ENCODE measurements at regions of chr5 and their contacts with region 1.

Region 1: DNA sequence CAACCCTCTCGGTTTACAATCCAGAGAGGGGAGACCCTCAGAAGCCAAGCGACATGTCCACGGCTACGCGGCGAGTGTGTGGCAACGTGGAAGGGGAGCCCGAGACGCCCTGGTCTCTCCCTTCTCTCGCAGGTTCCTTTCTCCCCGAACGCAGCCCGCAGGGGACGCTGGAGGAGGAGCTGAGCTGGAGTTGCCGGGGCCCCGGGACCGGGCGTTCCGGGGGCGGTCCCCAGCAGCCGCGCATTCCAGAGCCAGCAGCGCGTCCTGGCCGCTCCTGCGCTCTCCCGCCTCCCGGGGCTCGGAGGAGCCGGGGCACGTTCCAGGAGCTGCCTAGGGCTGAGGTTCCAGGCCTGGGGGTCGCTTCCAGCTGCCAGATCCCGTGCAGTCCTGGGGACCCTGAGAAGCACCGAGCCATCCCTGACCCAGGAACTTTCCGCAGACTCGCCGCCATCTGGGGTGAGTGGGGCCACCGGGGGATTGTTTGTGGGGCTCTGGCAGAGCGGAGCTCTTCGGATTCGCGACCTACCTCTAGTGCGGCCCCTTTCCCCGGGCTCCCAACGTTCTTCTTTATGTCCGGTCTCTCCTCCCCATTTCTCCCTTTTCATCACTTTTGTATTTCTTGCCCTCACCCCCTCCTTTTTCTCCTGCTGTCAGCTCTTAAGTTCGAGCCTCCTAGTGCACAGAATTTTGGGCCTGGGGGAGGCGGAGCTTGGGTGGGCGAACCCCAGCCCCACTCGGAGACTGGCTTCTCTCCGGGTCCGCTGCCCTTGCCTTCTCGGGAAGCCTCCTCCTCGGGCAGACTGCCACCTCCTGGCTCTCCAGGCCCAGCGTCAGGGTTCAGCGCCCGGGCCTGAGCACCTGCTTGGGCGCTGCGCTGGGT is at the start of gene SMIM3:
- DNase-seq: peak; percentile 58
- H3K4me3 ChIP-seq: peak within 1 kb of the TSS; percentile 7 to 41 (median 40)
- H3K27ac ChIP-seq: no peak within 1 kb of the TSS
- H3K4me1 ChIP-seq: peaks cover 30% of the 10 kb centered on the region
- H3K27me3 ChIP-seq: peaks cover 30 to 43% of the 10 kb centered on the region in 2 experiments
- CTCF ChIP-seq: peak; percentile 20 to 56
- POLR2A ChIP-seq: no peak
- total RNA-seq, gene SMIM3: 0.97 and 1.0 TPM in 2 replicates

Region 2: DNA sequence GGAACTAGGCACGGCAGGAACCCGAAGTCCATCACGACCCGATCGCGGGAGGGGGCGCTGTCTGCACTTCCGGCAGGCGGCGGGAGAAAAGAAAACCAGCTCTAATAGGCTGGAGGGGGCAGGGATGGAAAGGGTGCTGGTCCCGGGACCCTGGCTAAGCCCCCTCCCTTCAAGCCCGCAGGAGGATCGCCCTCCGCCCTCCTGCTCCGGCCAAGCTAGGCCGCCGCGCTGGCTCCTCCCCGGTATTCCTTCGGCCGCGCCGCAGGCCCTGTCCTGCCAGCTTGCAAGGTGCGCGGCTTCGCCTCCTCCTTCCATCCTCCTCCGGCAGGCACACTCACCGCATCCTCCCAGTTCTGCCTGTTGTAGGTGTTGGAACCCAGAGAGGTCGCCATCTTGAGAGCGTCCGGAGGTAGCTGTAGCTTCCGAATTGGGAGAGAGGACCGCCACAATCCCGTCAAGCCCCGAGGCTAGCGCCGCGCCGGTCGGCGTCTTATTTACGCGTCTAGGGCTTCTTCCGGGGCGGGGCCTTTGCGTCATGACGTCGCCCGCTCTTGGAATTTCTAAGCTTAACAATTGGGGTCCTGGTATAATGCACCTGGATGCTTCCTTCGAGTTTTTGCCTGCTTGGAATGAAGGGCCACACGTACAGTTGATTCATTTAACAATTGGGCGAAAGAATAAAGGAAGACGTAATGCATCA is 78.0 kb before region 1 on chr5 and contains the start of gene RBM22:
- CTCF ChIA-PET with region 1: interaction called, 19 read pairs
- POLR2A ChIA-PET with region 1: no interaction called
- dilution Hi-C with region 1: no loop called
- intact Hi-C with region 1: loop called (anchors 1 kb)
- DNase-seq: peak; percentile 92
- H3K4me3 ChIP-seq: peak within 1 kb of the TSS; percentile 45 to 98 (median 69)
- H3K27ac ChIP-seq: peak within 1 kb of the TSS; percentile 73
- H3K4me1 ChIP-seq: peaks cover 13% of the 10 kb centered on the region
- H3K27me3 ChIP-seq: peaks cover 3 to 6% of the 10 kb centered on the region in 2 experiments
- CTCF ChIP-seq: peak; percentile 40 to 78
- POLR2A ChIP-seq: peak; percentile 93
- total RNA-seq, gene RBM22: 44.4 and 51.2 TPM in 2 replicates

Region 3: DNA sequence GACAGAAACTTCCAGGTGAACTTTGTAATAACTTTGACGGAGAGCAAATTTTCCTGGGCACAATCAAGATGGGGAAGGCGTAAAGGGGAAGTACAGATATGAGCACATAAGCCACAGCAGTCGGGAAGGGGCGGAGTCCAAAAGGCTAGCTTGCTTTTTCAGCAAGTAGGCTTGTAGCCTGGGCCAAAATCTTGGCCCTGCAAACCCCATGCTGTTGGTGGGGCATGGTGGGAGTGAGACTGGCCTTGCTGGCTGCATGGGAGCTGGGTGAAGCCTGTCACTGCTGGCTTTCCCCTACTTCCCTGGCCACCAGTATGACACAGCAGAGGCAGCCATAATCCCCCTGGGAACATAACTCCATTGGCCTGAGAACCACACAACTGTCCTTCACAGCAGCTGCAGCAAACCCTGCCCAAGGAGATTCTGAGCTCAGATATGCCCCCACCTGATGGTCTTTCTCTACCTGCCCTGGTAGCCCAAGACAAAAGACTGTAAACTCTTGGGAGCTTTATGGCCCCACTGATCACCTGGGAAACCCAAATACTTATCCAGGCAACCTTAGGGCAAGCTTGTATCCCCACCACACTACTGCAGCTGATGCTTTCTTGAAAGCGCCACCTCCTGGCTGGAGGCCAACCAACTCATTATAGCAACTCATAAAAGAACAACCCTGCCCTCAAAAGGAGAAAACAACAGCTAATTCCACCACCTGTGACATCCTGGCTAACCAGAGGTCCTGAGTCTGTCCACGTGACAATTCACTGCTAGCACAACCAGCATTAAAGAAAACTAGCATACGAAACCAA is 44.0 kb before region 1 on chr5:
- CTCF ChIA-PET with region 1: no interaction called
- POLR2A ChIA-PET with region 1: no interaction called
- dilution Hi-C with region 1: no loop called
- intact Hi-C with region 1: no loop called
- DNase-seq: no peak
- H3K4me3 ChIP-seq: no peak overlapping the region
- H3K27ac ChIP-seq: no peak overlapping the region
- H3K4me1 ChIP-seq: no peaks in the 10 kb centered on the region
- H3K27me3 ChIP-seq: no peaks in the 10 kb centered on the region
- CTCF ChIP-seq: no peak
- POLR2A ChIP-seq: no peak

Region 4: DNA sequence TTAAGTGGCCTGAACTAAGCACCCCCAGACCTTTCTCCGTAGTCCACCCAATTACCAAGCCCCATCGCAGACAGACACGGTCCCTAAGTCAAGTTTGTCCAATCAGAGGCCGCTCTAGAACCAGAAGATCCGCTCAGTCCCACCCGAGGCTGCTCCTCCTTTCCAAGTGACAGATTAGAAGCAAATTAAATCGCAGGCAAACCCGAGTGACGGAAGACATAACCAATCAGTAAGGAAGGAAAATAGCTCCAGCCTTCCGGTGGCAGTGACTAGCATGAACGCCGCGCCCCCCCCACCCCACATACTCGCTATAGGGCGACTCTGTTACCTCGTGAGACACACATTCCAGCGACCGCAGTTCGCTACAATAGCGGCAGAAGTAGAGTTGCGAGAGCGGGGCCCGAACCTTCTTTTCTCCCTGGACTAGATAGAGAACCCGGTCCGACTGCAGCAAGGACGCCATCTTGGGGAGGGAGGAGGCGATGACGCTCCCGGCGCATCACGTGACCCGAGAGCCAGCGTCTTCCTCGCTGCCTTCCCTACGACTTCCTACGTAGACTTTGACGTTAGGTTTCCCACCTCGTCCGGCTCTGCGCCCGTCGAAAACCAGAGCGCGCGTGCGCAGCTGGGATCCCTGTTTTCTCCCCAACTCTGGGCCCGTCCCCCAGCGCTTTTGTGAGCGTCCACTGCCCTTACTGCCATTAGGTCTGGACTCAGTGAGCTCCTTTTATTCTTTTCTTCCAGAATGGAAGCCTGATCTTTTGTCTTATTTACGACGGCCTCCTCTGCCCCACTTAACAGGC is 20.0 kb before region 1 on chr5 and contains the start of gene DCTN4:
- CTCF ChIA-PET with region 1: interaction called, 14 read pairs
- POLR2A ChIA-PET with region 1: no interaction called
- dilution Hi-C with region 1: no loop called
- intact Hi-C with region 1: loop called (anchors 1 kb)
- DNase-seq: peak; percentile 99
- H3K4me3 ChIP-seq: peak within 1 kb of the TSS; percentile 62 to 80 (median 62)
- H3K27ac ChIP-seq: peak within 1 kb of the TSS; percentile 76
- H3K4me1 ChIP-seq: peaks cover 13% of the 10 kb centered on the region
- H3K27me3 ChIP-seq: peaks cover 0 to 5% of the 10 kb centered on the region in 2 experiments
- CTCF ChIP-seq: no peak
- POLR2A ChIP-seq: peak; percentile 84
- total RNA-seq, gene DCTN4: 42.8 and 47.3 TPM in 2 replicates

Region 5: DNA sequence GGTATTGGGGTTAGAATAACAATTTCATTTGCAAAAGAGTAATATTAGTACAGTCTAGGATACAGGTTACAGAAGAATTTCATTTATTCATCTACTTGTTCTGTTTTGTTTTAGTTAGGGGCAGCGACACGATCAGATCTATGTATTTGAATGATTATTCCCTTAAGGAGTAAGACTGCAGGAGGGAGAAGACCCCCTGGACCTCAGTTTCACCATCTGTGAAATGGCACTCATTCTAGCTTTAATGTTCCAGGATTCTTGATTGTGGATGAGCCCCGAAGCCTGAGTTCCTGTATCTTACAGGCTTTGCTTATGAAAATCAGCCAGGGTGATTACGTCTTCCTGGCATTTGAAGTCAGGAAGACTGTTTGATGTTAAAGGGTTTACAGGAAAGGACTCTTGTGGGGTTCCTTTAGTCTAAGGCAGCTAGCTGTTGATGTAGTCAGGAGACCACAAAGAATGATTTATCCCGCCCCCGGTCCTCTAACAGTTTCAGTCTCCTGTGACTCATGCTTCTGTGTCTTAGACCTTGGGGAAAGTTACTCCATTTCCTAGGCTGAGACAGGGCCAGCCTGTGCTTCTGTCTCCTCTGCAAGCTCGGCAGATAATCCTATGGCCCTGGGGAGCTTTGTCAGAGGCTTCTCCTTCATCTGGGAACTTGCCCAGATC is 11.3 kb after region 1 on chr5:
- CTCF ChIA-PET with region 1: interaction called, 15 read pairs
- POLR2A ChIA-PET with region 1: no interaction called
- dilution Hi-C with region 1: no loop called
- intact Hi-C with region 1: no loop called
- DNase-seq: peak; percentile 87
- H3K4me3 ChIP-seq: no peak overlapping the region
- H3K27ac ChIP-seq: no peak overlapping the region
- H3K4me1 ChIP-seq: peaks cover 9% of the 10 kb centered on the region
- H3K27me3 ChIP-seq: peaks cover 7 to 9% of the 10 kb centered on the region in 2 experiments
- CTCF ChIP-seq: no peak
- POLR2A ChIP-seq: no peak